Posterior vena cava (tissue), 2 donors: ENCODE measurements at regions of chr4 and their contacts with region 1.

Region 1: DNA sequence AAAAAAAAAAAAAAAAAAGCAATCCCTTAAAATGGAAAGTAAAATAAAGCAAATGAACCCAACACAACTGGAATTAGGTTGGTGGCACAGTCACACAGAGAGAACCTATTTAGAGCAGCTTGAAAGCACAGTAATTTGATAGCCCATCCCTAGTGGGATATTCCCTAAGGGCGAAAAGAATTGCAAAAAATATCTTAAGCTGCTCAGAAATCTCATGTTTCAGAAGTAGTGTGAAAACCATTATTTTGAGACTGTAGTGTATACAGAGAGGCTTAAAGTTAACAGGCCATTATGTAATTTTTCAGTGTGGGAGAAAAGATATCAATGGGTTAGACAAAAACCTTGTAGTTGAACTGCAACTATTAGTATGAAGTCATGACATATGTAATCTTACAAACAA is 40.0 kb upstream of the DHX15 start:
- DNase-seq: no peak

Region 2: GRCh38 chr4:24363751-24364150 is 260.6 kb before region 1 on chr4:
- intact Hi-C with region 1: loop called in 1 of 2 experiments (anchors 5 kb)
- DNase-seq: no peak

Region 3: GRCh38 chr4:24570574-24571236 is 53.7 kb before region 1 on chr4:
- intact Hi-C with region 1: no loop called
- DNase-seq: no peak

Region 4: GRCh38 chr4:24686871-24687680 is 62.7 kb after region 1 on chr4:
- intact Hi-C with region 1: no loop called
- DNase-seq: no peak